ENCODE measurements at regions of chr4 and their contacts with region 1.

Region 1: DNA sequence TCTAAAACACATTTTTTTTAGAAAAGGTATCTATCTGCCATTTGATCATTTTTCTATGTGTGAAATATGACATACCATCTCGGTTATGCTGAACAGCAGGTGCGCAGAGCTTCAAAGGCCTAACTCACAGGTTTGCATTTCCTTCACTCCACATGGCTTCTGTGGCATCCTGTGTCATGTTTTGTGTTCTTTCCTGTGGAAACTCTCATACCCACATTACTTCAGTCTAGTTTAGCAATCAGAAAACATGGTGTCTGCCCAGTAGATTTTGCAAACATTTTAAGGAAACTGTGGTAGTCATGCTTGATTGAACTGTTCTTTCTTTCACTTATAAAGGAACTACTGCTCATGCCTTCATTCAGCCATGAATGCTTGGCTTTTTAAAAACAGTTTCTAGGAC is 11.3 kb upstream of the ARAP2 start:
- DNase-seq: peak; percentile 81
- H3K4me3 Mint-ChIP-seq: peak overlapping the region; percentile 41
- H3K27ac Mint-ChIP-seq: peak overlapping the region; percentile 90
- H3K4me1 Mint-ChIP-seq: peaks cover 30% of the 10 kb centered on the region
- H3K27me3 Mint-ChIP-seq: no peaks in the 10 kb centered on the region

Region 2: DNA sequence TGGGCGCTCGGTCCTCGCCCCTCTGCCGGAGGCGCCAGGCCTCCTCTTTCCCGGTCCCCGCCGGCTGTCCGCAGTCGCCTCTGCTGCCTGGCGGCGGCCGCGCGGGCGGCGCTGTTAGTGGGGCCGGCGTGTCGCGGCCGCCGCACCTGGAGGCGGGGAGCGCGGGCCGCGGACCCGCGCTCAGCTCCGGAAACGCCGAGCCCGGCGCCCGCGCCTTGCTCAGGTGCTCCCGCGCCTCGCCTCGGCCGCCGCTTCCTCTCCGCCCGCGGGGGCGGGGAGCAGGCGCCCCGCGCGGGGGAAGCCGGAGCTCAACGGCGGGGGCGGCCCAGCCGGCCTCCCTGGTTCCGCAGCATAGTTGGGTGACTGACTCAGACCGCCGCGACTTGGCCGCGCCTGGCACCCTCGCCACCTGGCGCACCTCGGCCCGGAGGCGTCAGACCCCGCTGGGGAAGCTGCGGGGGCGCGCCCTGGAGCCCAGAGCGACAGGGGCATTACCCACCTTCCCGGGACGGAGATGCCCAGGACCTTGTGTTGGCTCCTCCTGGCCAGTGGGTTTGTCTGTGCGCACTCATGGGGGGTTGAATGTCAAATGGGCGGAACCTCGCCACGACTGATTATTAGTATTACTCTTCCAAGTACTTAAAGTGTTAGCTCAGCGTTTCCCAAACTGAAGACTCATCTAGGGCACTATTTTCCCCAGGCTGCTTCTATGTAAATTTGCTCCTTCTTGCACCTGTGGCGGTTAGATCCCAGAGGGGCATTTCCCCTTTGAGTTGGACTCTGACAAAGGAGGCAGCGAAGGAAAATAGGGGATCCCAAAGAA is 11.1 kb before region 1 on chr4 and contains the start of gene ARAP2:
- CTCF ChIA-PET with region 1: interaction called, 26 read pairs
- intact Hi-C with region 1: loop called (anchors 1 kb)
- DNase-seq: peak; percentile 77
- H3K4me3 Mint-ChIP-seq: peak within 1 kb of the TSS; percentile 94
- H3K27ac Mint-ChIP-seq: peak within 1 kb of the TSS; percentile 88
- H3K4me1 Mint-ChIP-seq: peaks cover 24% of the 10 kb centered on the region
- H3K27me3 Mint-ChIP-seq: no peaks in the 10 kb centered on the region
- total RNA-seq, gene ARAP2: 29.6 to 38.2 TPM

Region 3: DNA sequence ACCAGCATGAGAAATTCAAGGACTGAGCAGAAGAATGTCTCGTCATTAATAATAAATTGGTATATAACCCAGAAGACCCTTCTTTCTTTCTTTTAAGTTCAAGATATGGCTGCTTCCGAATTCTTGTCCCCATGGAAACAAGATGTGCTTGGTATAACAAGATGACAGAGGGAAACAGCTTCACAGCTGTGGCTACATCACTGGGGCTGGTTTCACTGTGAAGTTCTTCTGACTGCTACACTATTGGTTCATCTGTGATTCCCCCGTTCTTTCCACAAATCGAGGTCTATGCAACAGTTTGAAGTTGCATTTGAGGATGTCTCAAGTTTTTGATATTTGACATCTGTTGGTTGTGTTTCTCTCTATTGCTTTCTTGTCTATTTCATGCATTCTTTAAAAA is 13.5 kb after region 1 on chr4:
- CTCF ChIA-PET with region 1: interaction called, 4 read pairs
- intact Hi-C with region 1: loop called (anchors 1 kb)
- DNase-seq: peak; percentile 53
- H3K4me3 Mint-ChIP-seq: no peak overlapping the region
- H3K27ac Mint-ChIP-seq: no peak overlapping the region
- H3K4me1 Mint-ChIP-seq: peaks cover 34% of the 10 kb centered on the region
- H3K27me3 Mint-ChIP-seq: no peaks in the 10 kb centered on the region

Region 4: GRCh38 chr4:36316607-36317006 is 61.0 kb after region 1 on chr4:
- CTCF ChIA-PET with region 1: interaction called, 7 read pairs
- intact Hi-C with region 1: loop called (anchors 1 kb)
- DNase-seq: peak; percentile 22
- H3K4me3 Mint-ChIP-seq: no peak overlapping the region
- H3K27ac Mint-ChIP-seq: peak overlapping the region; percentile 80
- H3K4me1 Mint-ChIP-seq: peaks cover 48% of the 10 kb centered on the region
- H3K27me3 Mint-ChIP-seq: no peaks in the 10 kb centered on the region

Region 5: DNA sequence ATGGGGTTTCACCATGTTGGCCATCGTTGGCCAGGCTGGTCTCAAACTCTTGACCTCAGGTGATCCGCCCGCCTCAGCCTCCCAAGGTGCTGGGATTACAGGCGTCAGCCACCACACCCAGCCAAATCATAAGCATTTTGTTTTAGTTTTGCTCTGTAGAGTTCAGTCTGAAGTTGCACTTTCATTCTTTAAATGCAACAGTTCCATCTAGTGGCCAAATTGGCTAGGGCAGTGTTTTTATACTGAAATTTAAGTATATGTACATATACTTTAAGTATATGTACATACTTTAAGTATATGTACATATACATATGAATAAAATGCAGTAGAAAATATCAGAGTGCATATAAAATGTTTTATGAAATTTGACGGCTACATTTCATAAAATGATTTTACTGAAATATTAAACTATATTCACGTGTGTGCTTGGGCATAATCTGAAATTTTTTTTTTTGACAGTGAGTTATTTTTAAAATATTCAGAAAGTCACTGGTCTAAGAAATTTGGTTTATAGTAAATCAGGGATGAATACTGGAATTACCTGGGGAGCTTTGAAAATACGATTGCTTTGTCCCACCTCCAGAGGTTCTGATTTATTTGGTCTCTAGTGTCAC is 1134.5 kb after region 1 on chr4:
- CTCF ChIA-PET with region 1: no interaction called
- intact Hi-C with region 1: loop called (anchors 2 kb)
- DNase-seq: peak; percentile 56
- H3K4me3 Mint-ChIP-seq: no peak overlapping the region
- H3K27ac Mint-ChIP-seq: no peak overlapping the region
- H3K4me1 Mint-ChIP-seq: no peaks in the 10 kb centered on the region
- H3K27me3 Mint-ChIP-seq: peaks cover 5% of the 10 kb centered on the region

Measured in activated naive CD4-positive, alpha-beta T cell treated with anti-CD3 and anti-CD28 coated beads for 36 hours (primary cell).